ENCODE measurements at regions of chr9 and their contacts with region 1.

Region 1: DNA sequence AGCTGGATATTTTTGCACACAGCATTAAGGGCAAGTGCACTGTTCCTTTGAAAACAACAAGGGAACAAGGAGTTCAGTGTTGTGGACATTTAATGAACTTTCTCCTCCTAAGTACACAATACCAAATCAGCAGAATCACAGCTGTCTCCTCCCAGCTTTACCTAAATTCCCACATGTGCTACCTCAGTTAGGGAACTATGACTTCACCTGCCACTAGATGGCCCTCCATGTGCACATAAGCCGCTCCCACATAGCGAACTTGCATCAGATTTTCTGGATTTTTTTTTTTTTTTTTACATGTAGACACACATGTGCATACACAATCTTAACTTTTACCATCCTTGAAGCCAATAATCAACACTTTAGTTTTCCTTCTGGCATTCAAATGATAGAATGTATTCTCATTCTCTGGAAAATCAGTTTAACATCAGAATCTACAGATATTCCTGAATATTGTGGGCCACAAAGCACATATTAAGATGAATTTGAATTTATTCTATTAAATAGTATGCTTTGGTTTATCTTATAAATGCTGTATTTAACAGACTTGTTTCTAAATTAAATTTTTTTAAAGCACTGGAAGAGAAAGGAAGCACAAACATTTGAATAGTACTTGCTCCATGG is 123.6 kb downstream of the PALM2AKAP2 start:
- DNase-seq: peak; percentile 58
- H3K4me3 Mint-ChIP-seq: no peak overlapping the region
- H3K27ac Mint-ChIP-seq: no peak overlapping the region
- H3K4me1 Mint-ChIP-seq: no peaks in the 10 kb centered on the region
- H3K27me3 Mint-ChIP-seq: peaks cover 33% of the 10 kb centered on the region
- CTCF ChIP-seq: no peak

Region 2: GRCh38 chr9:109868207-109868606 is 35.4 kb before region 1 on chr9:
- CTCF ChIA-PET with region 1: no interaction called
- intact Hi-C with region 1: no loop called
- DNase-seq: no peak
- H3K4me3 Mint-ChIP-seq: no peak overlapping the region
- H3K27ac Mint-ChIP-seq: no peak overlapping the region
- H3K4me1 Mint-ChIP-seq: no peaks in the 10 kb centered on the region
- H3K27me3 Mint-ChIP-seq: peaks cover 13% of the 10 kb centered on the region
- CTCF ChIP-seq: no peak

Region 3: DNA sequence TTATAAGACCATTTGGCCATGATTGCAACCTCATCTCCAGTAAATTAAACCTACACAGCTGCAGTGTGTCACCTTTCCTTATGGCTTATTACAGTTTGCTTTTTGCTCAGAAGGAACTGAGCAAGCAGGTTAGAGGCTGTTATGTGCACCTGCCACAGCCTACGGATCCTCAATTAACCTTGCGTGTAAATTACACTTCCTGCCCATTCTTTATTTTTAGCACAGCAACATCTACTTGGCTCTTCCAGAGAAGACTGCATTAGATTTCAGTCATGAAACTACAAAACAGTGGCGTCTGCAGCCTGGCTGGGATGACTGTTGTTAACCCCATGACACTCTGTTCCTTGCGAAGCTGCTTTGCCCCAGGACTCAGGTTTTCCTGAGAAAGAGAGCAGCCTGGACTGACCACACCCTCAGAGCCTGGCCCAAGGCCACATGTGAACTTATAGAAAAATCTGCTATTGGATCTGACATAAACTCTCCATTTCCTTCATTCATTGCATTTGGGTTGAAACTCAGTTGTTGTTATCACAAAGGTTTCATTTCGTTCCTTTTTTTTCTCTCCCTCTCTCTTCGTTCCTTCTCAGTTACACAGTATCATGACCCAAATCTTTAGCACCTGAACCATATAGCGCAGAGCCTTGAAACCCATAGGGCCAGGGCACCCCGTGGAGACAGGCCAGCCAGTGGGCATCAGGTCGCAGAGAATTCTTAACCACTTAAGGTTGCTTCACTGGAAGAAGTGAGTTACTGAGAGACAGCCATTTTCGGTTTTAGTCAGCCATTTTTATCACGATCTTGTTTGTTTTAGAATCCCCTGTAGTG is 14.9 kb after region 1 on chr9:
- CTCF ChIA-PET with region 1: no interaction called
- intact Hi-C with region 1: no loop called
- DNase-seq: no peak
- H3K4me3 Mint-ChIP-seq: no peak overlapping the region
- H3K27ac Mint-ChIP-seq: no peak overlapping the region
- H3K4me1 Mint-ChIP-seq: no peaks in the 10 kb centered on the region
- H3K27me3 Mint-ChIP-seq: no peaks in the 10 kb centered on the region
- CTCF ChIP-seq: no peak

Region 4: GRCh38 chr9:110152704-110153374 is 249.2 kb after region 1 on chr9:
- CTCF ChIA-PET with region 1: interaction called, 9 read pairs
- intact Hi-C with region 1: loop called (anchors 1 kb)
- DNase-seq: peak; percentile 28
- H3K4me3 Mint-ChIP-seq: no peak overlapping the region
- H3K27ac Mint-ChIP-seq: no peak overlapping the region
- H3K4me1 Mint-ChIP-seq: peaks cover 9% of the 10 kb centered on the region
- H3K27me3 Mint-ChIP-seq: no peaks in the 10 kb centered on the region
- CTCF ChIP-seq: peak; percentile 51

Measured in Calu3 (cell line).